ENCODE measurements at regions of chr12 and their contacts with region 1.

Region 1: GRCh38 chr12:31819427-31819826 is 90.6 kb upstream of the AMN1 start:
- DNase-seq: peak; percentile 71
- H3K4me3 ChIP-seq: no peak overlapping the region
- H3K27ac ChIP-seq: peak overlapping the region; percentile 83
- H3K4me1 ChIP-seq: peaks cover 15% of the 10 kb centered on the region
- H3K27me3 ChIP-seq: no peaks in the 10 kb centered on the region
- CTCF ChIP-seq: no peak
- POLR2A ChIP-seq: no peak

Region 2: DNA sequence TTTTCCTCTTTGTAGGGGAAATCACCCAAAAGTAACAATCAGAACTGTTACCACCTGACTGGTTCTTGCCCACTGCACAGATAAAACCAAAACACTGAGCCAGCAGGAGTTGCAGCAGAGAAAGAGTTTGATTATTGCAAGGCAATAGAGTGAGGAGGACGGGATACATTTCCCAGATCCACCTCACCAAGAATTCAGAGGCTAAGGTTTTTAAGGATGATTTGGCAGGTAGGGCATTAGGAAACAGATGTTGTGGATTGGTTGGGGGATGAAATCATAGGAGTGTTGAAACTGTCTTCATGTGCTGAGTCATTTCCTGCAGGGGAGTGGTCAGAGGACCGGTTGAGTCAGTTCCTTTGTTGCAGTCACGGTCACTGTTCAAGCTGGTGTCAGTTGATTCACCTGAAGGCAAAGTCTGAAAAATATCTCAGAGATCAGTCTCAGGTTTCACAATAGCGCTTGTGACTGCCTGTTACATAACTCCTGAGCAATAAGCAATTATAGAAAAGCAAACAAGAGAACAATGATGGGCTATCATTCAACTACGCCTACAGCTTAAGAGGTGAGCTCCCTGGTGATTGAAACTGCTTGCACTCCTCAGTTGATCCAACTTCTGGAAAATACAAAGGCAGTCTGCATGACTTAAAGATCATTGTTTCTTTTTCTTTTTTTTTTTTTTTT is 70.3 kb before region 1 on chr12:
- CTCF ChIA-PET with region 1: no interaction called
- POLR2A ChIA-PET with region 1: no interaction called
- dilution Hi-C with region 1: no loop called
- intact Hi-C with region 1: loop called (anchors 5 kb)
- DNase-seq: peak; percentile 98
- H3K4me3 ChIP-seq: no peak overlapping the region
- H3K27ac ChIP-seq: peak overlapping the region; percentile 93
- H3K4me1 ChIP-seq: peaks cover 42% of the 10 kb centered on the region
- H3K27me3 ChIP-seq: no peaks in the 10 kb centered on the region
- CTCF ChIP-seq: no peak
- POLR2A ChIP-seq: peak; percentile 33

Region 3: GRCh38 chr12:31804185-31804504 is 15.3 kb before region 1 on chr12:
- CTCF ChIA-PET with region 1: no interaction called
- POLR2A ChIA-PET with region 1: no interaction called
- dilution Hi-C with region 1: no loop called
- intact Hi-C with region 1: no loop called
- DNase-seq: no peak
- H3K4me3 ChIP-seq: no peak overlapping the region
- H3K27ac ChIP-seq: no peak overlapping the region
- H3K4me1 ChIP-seq: no peaks in the 10 kb centered on the region
- H3K27me3 ChIP-seq: no peaks in the 10 kb centered on the region
- CTCF ChIP-seq: no peak
- POLR2A ChIP-seq: no peak

Region 4: DNA sequence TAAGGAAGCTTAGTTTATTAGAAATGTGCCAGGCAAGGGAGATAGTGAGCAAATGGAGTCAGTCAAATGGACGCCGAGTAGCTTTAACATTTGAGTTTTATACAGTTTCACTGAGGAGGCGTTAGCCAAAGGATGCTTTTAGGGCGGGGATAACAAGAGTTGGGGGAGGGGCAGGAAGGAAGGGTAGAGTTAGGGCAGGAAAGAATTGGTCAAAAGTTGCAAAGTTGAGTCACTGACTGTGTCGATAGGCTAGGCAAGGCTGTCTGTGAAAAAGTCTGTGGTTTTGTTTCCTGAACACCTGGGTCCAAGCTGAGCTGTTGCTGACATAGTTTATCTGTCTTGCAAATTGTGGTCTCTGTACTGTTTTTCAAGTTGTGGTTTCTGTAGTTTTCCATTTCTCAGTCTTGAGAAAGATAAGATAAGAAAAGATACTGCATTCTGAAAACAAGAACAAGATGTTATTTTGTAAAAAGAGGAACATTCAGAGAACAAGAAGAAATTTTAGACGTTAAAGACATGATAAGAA is 77.2 kb after region 1 on chr12:
- CTCF ChIA-PET with region 1: no interaction called
- POLR2A ChIA-PET with region 1: no interaction called
- dilution Hi-C with region 1: no loop called
- intact Hi-C with region 1: loop called (anchors 1 kb)
- DNase-seq: peak; percentile 91
- H3K4me3 ChIP-seq: peak overlapping the region in 1 of 3 experiments; percentile 30
- H3K27ac ChIP-seq: peak overlapping the region; percentile 74
- H3K4me1 ChIP-seq: peaks cover 18% of the 10 kb centered on the region
- H3K27me3 ChIP-seq: no peaks in the 10 kb centered on the region
- CTCF ChIP-seq: no peak
- POLR2A ChIP-seq: no peak

Measured in endothelial cell of umbilical vein (primary cell).